Posterior cingulate gyrus (tissue), 11 donors: ENCODE measurements at regions of chrX and their contacts with region 1.

Region 1: GRCh38 chrX:16418650-16419049 is 231.3 kb upstream of the S100G start:
- DNase-seq: no peak

Region 2: DNA sequence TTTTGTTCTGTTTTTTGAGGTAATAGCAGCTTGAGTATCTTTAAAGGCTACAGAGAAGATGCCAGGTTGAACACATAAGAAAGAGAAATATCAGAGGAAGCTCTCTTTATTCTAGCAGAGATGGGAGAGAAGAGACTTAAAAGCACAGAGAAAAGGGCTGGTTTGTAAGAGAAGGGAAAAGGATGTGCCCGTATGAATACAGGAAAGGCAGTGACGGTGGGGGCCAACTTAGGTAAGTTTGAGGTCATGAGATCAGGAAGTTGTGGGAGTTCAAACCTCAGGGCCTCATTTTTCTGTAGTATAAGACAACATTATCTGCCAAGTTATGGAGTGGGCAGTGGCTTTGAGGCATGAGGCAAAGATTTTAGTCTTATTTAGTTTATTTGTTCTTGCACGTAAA is 110.0 kb after region 1 on chrX:
- intact Hi-C with region 1: loop called (anchors 10 kb)
- DNase-seq: no peak